H1 (cell line): ENCODE measurements at regions of chr11 and their contacts with region 1.

Region 1: GRCh38 chr11:125887373-125888324 is at the start of gene HYLS1:
- DNase-seq: peak; percentile 84 to 93
- H3K4me3 ChIP-seq: peak within 1 kb of the TSS; percentile 58 to 73 (median 62)
- H3K27ac ChIP-seq: peak within 1 kb of the TSS; percentile 77; the same call in 1 of the 2 replicates
- H3K4me1 ChIP-seq: no peaks in the 10 kb centered on the region
- H3K27me3 ChIP-seq: peaks cover 0 to 3% (median 2%) of the 10 kb centered on the region in 4 experiments; a peak in 4 of 7 replicates
- CTCF ChIP-seq: peak; percentile 3 to 14 (median 6); a peak in 3 of 4 replicates
- EP300 ChIP-seq: no peak
- POLR2A ChIP-seq: peak; percentile 71 to 82
- RAD21 ChIP-seq: peak in 1 of 2 experiments; percentile 7; a peak in 1 of 4 replicates
- total RNA-seq, gene HYLS1: 11.6 and 12.6 TPM in 2 replicates

Region 2: GRCh38 chr11:125902927-125903710 is 15.5 kb after region 1 on chr11 and contains the start of gene PUS3:
- CTCF ChIA-PET with region 1: interaction called, 4 read pairs
- POLR2A ChIA-PET with region 1: interaction called, 27 read pairs
- DNase-seq: peak; percentile 23 to 89
- H3K4me3 ChIP-seq: peak within 1 kb of the TSS; percentile 85 to 99 (median 92)
- H3K27ac ChIP-seq: no peak within 1 kb of the TSS
- H3K4me1 ChIP-seq: peaks cover 0 to 4% (median 0%) of the 10 kb centered on the region in 4 experiments; a peak in 2 of 7 replicates
- H3K27me3 ChIP-seq: peaks cover 3 to 18% (median 12%) of the 10 kb centered on the region in 4 experiments
- CTCF ChIP-seq: no peak
- EP300 ChIP-seq: no peak
- POLR2A ChIP-seq: peak; percentile 40 to 49
- RAD21 ChIP-seq: no peak
- total RNA-seq, gene PUS3: 20.0 and 22.6 TPM in 2 replicates